T-cell (primary cell): ENCODE measurements at regions of chr12 and their contacts with region 1.

Region 1: GRCh38 chr12:52011602-52012214 is 5.0 kb downstream of the TAMALIN start:
- DNase-seq: no peak
- ATAC-seq: no peak
- H3K4me3 ChIP-seq: no peak overlapping the region
- H3K4me3 Mint-ChIP-seq: no peak overlapping the region
- H3K27ac ChIP-seq: no peak overlapping the region
- H3K27ac Mint-ChIP-seq: no peak overlapping the region
- H3K4me1 ChIP-seq: peaks cover 3 to 23% of the 10 kb centered on the region in 2 experiments
- H3K4me1 Mint-ChIP-seq: peaks cover 9 to 27% (median 13%) of the 10 kb centered on the region in 3 donors
- H3K27me3 ChIP-seq: peaks cover 0 to 10% of the 10 kb centered on the region in 2 experiments
- H3K27me3 Mint-ChIP-seq: no peaks in the 10 kb centered on the region

Region 2: DNA sequence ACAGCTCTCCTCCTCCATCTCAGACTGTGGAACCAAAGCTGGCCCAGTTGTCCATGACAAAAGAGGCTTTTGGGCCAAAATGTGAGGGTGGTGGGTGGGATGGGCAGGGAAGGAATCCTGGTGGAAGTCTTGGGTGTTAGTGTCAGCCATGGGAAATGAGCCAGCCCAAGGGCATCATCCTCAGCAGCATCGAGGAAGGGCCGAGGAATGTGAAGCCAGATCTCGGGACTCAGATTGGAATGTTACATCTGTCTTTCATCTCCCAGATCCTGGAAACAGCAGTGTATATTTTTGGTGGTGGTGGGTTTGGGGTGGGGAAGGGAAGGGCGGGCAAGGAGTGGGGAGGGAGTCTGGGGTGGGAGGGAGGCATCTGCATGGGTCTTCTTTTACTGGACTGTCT is 16.7 kb before region 1 on chr12:
- CTCF ChIA-PET with region 1: interaction called, 3 to 8 read pairs
- POLR2A ChIA-PET with region 1: interaction called, 6 to 10 read pairs
- DNase-seq: no peak
- ATAC-seq: no peak
- H3K4me3 ChIP-seq: no peak overlapping the region
- H3K4me3 Mint-ChIP-seq: no peak overlapping the region
- H3K27ac ChIP-seq: no peak overlapping the region
- H3K27ac Mint-ChIP-seq: no peak overlapping the region
- H3K4me1 ChIP-seq: peaks cover 0 to 3% of the 10 kb centered on the region in 2 experiments
- H3K4me1 Mint-ChIP-seq: peaks cover 0 to 16% (median 5%) of the 10 kb centered on the region in 3 donors
- H3K27me3 ChIP-seq: no peaks in the 10 kb centered on the region
- H3K27me3 Mint-ChIP-seq: no peaks in the 10 kb centered on the region